ENCODE measurements at regions of chr14 and their contacts with region 1.

Region 1: GRCh38 chr14:93999573-93999972 is 2.5 kb downstream of the CCDC197 start:
- DNase-seq: no peak
- H3K4me3 ChIP-seq: no peak overlapping the region
- H3K27ac ChIP-seq: no peak overlapping the region
- H3K4me1 ChIP-seq: no peaks in the 10 kb centered on the region
- H3K27me3 ChIP-seq: no peaks in the 10 kb centered on the region
- CTCF ChIP-seq: no peak
- POLR2A ChIP-seq: no peak

Region 2: DNA sequence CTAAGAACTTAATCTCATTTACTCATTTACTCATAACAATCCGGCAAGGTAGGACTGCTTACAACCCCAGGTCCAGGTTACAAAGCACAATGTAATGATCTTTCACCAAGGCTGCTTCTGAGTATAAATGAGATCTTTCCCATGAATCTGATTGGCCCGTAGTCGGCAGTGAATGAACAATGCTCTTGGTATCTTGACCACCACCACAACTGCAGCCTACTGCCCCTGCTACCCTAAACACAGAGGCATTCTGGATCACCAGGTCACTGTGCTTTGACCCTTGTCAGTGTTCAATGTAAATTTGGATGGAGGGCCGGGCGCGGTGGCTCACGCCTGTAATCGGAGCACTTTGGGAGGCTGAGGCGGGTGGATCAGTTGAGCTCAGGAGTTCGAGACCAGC is 56.5 kb before region 1 on chr14:
- intact Hi-C with region 1: loop called (anchors 2 kb)
- DNase-seq: no peak
- H3K4me3 ChIP-seq: no peak overlapping the region
- H3K27ac ChIP-seq: no peak overlapping the region
- H3K4me1 ChIP-seq: no peaks in the 10 kb centered on the region
- H3K27me3 ChIP-seq: no peaks in the 10 kb centered on the region
- CTCF ChIP-seq: no peak
- POLR2A ChIP-seq: no peak

Measured in uterus (tissue), 4 donors.